ENCODE measurements at regions of chr3 and their contacts with region 1.

Region 1: DNA sequence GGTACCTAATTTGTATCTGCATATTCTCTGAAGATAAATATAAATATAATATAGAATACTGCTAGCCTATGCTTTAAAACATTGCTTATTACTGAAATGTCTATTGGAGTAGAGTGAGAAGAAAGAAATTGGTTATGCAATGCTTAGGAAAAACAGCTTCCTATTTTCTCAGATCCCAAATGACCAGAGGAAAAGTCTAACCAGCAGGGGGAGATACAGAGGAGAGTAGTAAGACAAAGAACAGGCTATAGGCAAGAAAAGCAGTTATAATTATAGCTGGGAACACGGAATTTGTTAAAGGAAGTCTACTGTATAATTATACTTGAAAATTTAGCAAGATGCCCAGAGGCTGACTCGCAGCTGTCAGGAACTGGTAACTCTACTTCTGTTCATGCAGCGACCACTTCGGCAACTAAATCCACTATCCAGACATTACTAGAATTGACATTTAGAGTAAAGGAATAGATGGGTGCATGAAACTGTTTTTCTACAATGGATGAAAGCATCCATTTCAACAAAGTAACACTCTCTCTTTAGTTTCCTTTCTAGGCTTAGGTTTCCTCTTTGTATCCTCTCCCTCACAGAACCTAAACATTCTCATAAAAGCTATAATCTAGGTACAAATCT is 97.2 kb downstream of the TBC1D5 start:
- DNase-seq: peak; percentile 31 to 71
- ATAC-seq: peak; percentile 81 to 88
- H3K4me3 ChIP-seq: no peak overlapping the region
- H3K27ac ChIP-seq: peak overlapping the region in 1 of 2 experiments; percentile 27; a peak in 2 of 6 replicates
- H3K4me1 ChIP-seq: peaks cover 36% of the 10 kb centered on the region
- CTCF ChIP-seq: peak; percentile 69
- EP300 ChIP-seq: no peak
- POLR2A ChIP-seq: no peak
- RAD21 ChIP-seq: peak; percentile 57 to 58

Region 2: DNA sequence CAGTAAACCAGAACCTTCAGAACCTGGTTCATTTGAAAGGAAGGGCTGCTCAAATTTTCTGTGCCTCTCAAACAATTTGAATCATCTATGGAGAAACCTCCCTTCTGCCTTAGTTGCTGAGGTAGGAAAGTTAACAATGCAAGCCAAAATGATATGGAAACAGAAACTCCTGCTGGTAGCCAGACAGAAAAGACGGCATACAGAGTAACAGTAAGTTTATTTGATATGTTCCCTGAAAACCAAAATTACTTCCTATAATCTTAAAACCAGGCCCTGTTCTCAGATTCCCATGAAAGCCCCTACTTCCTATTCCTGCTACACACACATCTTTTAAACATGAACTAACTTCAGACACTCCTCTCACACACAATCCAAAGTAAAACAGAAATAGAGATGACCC is 11.1 kb after region 1 on chr3:
- CTCF ChIA-PET with region 1: interaction called, 32 read pairs
- POLR2A ChIA-PET with region 1: no interaction called
- DNase-seq: no peak
- ATAC-seq: no peak
- H3K4me3 ChIP-seq: no peak overlapping the region
- H3K27ac ChIP-seq: no peak overlapping the region
- H3K4me1 ChIP-seq: no peaks in the 10 kb centered on the region
- CTCF ChIP-seq: no peak
- EP300 ChIP-seq: no peak
- POLR2A ChIP-seq: no peak
- RAD21 ChIP-seq: no peak

Region 3: GRCh38 chr3:17672506-17672905 is 27.3 kb after region 1 on chr3:
- CTCF ChIA-PET with region 1: interaction called, 11 read pairs
- POLR2A ChIA-PET with region 1: no interaction called
- DNase-seq: no peak
- ATAC-seq: no peak
- H3K4me3 ChIP-seq: no peak overlapping the region
- H3K27ac ChIP-seq: no peak overlapping the region
- H3K4me1 ChIP-seq: no peaks in the 10 kb centered on the region
- CTCF ChIP-seq: no peak
- EP300 ChIP-seq: no peak
- POLR2A ChIP-seq: no peak
- RAD21 ChIP-seq: no peak

Region 4: GRCh38 chr3:17686613-17687012 is 41.4 kb after region 1 on chr3:
- CTCF ChIA-PET with region 1: interaction called, 17 read pairs
- POLR2A ChIA-PET with region 1: no interaction called
- DNase-seq: peak; percentile 13 to 71
- ATAC-seq: peak; percentile 73 to 93; a peak in 4 of 6 replicates
- H3K4me3 ChIP-seq: no peak overlapping the region
- H3K27ac ChIP-seq: no peak overlapping the region
- H3K4me1 ChIP-seq: 0 out of 3 replicates have a peak, but pooled peaks cover 2% of the 10 kb centered on the region
- CTCF ChIP-seq: peak; percentile 76
- EP300 ChIP-seq: no peak
- POLR2A ChIP-seq: no peak
- RAD21 ChIP-seq: peak; percentile 81 to 83

Region 5: GRCh38 chr3:18282507-18282906 is 637.3 kb after region 1 on chr3:
- CTCF ChIA-PET with region 1: no interaction called
- POLR2A ChIA-PET with region 1: no interaction called
- DNase-seq: no peak
- ATAC-seq: no peak
- H3K4me3 ChIP-seq: no peak overlapping the region
- H3K27ac ChIP-seq: no peak overlapping the region
- H3K4me1 ChIP-seq: no peaks in the 10 kb centered on the region
- CTCF ChIP-seq: no peak
- EP300 ChIP-seq: no peak
- POLR2A ChIP-seq: no peak
- RAD21 ChIP-seq: no peak